Activated T-helper 2 cell treated with anti-CD3 and anti-CD28 coated beads, Interferon-gamma antibody, Interleukin-2, Interleukin-4, amounts not matched to agents 10 μg/mL and 5 μg/mL and 100 μg/mL, durations not matched to agents 14 hours and 24 hours and 36 hours (primary cell): ENCODE measurements at regions of chr1 and their contacts with region 1.

Region 1: GRCh38 chr1:59477286-59477685 is 180.4 kb downstream of the FGGY start:
- DNase-seq: peak; percentile 40
- H3K4me3 Mint-ChIP-seq: peak overlapping the region; percentile 54
- H3K27ac Mint-ChIP-seq: peak overlapping the region; percentile 91
- H3K4me1 Mint-ChIP-seq: peaks cover 21% of the 10 kb centered on the region
- H3K27me3 Mint-ChIP-seq: no peaks in the 10 kb centered on the region

Region 2: DNA sequence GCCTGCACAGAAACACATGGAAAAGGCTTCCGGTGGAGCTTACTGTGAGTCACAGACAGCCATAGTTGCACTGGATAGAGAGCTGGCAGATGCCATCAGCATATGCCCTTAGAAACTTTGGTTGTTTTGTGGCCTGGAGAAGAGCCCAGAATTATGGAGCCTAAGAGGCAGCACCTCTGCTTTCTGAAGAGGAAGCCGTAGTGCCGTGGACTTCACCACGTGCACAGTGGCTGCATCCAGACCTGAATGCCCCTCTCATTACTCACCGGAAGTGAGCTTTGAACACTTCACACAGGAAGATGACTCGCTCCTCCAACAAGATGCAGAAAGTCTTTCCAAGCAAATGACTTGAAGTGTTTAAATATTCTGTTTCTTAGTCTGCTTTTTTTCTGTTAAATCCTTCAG is 721.8 kb before region 1 on chr1:
- intact Hi-C with region 1: loop called (anchors 10 kb)
- DNase-seq: peak; percentile 30
- H3K4me3 Mint-ChIP-seq: peak overlapping the region; percentile 46
- H3K27ac Mint-ChIP-seq: peak overlapping the region; percentile 86
- H3K4me1 Mint-ChIP-seq: peaks cover 60% of the 10 kb centered on the region
- H3K27me3 Mint-ChIP-seq: no peaks in the 10 kb centered on the region

Region 3: DNA sequence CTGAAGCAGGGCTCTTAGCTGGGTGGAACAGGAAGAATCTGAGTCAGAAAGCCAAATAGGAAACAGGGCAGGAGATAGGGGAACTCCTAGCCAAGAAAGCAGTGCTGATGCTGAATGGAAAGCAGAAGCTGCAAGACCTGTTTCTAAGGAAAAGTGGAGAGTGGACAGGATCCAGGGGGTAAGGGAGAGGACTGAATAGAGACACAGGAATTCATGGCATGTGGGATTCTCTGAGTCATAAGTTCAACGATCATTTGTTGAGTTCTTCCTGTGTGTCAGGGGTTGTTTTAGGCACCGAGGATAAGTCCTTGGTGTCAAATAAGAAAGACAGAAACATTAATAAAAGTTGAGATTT is 334.2 kb before region 1 on chr1:
- intact Hi-C with region 1: loop called (anchors 5 kb)
- DNase-seq: no peak
- H3K4me3 Mint-ChIP-seq: no peak overlapping the region
- H3K27ac Mint-ChIP-seq: peak overlapping the region; percentile 62
- H3K4me1 Mint-ChIP-seq: peaks cover 59% of the 10 kb centered on the region
- H3K27me3 Mint-ChIP-seq: no peaks in the 10 kb centered on the region

Region 4: GRCh38 chr1:59354709-59355337 is 122.5 kb before region 1 on chr1:
- intact Hi-C with region 1: loop called (anchors 1 kb)
- DNase-seq: no peak
- H3K4me3 Mint-ChIP-seq: peak overlapping the region; percentile 32
- H3K27ac Mint-ChIP-seq: peak overlapping the region; percentile 95
- H3K4me1 Mint-ChIP-seq: peaks cover 37% of the 10 kb centered on the region
- H3K27me3 Mint-ChIP-seq: no peaks in the 10 kb centered on the region

Region 5: GRCh38 chr1:59393211-59394180 is 83.8 kb before region 1 on chr1:
- intact Hi-C with region 1: loop called (anchors 10 kb)
- DNase-seq: no peak
- H3K4me3 Mint-ChIP-seq: no peak overlapping the region
- H3K27ac Mint-ChIP-seq: peak overlapping the region; percentile 52
- H3K4me1 Mint-ChIP-seq: peaks cover 55% of the 10 kb centered on the region
- H3K27me3 Mint-ChIP-seq: no peaks in the 10 kb centered on the region

Region 6: GRCh38 chr1:59498640-59499039 is 21.4 kb after region 1 on chr1:
- intact Hi-C with region 1: no loop called
- DNase-seq: no peak
- H3K4me3 Mint-ChIP-seq: no peak overlapping the region
- H3K27ac Mint-ChIP-seq: no peak overlapping the region
- H3K4me1 Mint-ChIP-seq: peaks cover 10% of the 10 kb centered on the region
- H3K27me3 Mint-ChIP-seq: no peaks in the 10 kb centered on the region